CD8-positive, alpha-beta T cell (primary cell): ENCODE measurements at regions of chr4 and their contacts with region 1.

Region 1: GRCh38 chr4:137180349-137180748 is 351.9 kb downstream of the PCDH18 start:
- DNase-seq: no peak
- ATAC-seq: no peak
- H3K4me3 ChIP-seq: no peak overlapping the region
- H3K4me3 Mint-ChIP-seq: no peak overlapping the region
- H3K27ac ChIP-seq: no peak overlapping the region
- H3K27ac Mint-ChIP-seq: no peak overlapping the region
- H3K4me1 ChIP-seq: no peaks in the 10 kb centered on the region
- H3K4me1 Mint-ChIP-seq: no peaks in the 10 kb centered on the region
- H3K27me3 ChIP-seq: no peaks in the 10 kb centered on the region
- H3K27me3 Mint-ChIP-seq: no peaks in the 10 kb centered on the region
- CTCF ChIP-seq: no peak

Region 2: DNA sequence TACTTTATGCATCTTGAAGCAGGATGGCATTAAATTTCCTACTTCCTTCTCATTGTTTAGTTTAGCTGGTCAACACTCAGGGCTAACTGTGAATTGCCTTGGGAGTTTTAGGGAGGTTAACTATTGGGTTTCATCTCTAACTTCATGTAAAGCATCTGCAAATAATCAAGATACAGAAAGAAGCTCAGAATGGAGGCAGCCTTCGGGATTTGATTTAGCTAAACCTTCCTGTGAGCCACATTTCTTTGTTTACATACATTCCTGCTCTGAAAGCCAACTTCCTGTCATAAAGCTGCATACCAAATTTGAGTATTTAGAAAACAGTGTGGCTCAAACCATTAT is 483.7 kb after region 1 on chr4:
- CTCF ChIA-PET with region 1: no interaction called
- POLR2A ChIA-PET with region 1: no interaction called
- intact Hi-C with region 1: loop called in 1 of 2 experiments (anchors 5 kb)
- DNase-seq: no peak
- ATAC-seq: no peak
- H3K4me3 ChIP-seq: no peak overlapping the region
- H3K4me3 Mint-ChIP-seq: no peak overlapping the region
- H3K27ac ChIP-seq: no peak overlapping the region
- H3K27ac Mint-ChIP-seq: no peak overlapping the region
- H3K4me1 ChIP-seq: no peaks in the 10 kb centered on the region
- H3K4me1 Mint-ChIP-seq: no peaks in the 10 kb centered on the region
- H3K27me3 ChIP-seq: no peaks in the 10 kb centered on the region
- H3K27me3 Mint-ChIP-seq: no peaks in the 10 kb centered on the region
- CTCF ChIP-seq: no peak

Region 3: GRCh38 chr4:138249132-138249531 is 1068.8 kb after region 1 on chr4:
- CTCF ChIA-PET with region 1: no interaction called
- POLR2A ChIA-PET with region 1: no interaction called
- intact Hi-C with region 1: no loop called
- DNase-seq: no peak
- ATAC-seq: no peak
- H3K4me3 ChIP-seq: no peak overlapping the region
- H3K4me3 Mint-ChIP-seq: no peak overlapping the region
- H3K27ac ChIP-seq: no peak overlapping the region
- H3K27ac Mint-ChIP-seq: no peak overlapping the region
- H3K4me1 ChIP-seq: no peaks in the 10 kb centered on the region
- H3K4me1 Mint-ChIP-seq: no peaks in the 10 kb centered on the region
- H3K27me3 ChIP-seq: no peaks in the 10 kb centered on the region
- H3K27me3 Mint-ChIP-seq: no peaks in the 10 kb centered on the region
- CTCF ChIP-seq: no peak